Heart right ventricle (tissue), 16 donors: ENCODE measurements at regions of chr3 and their contacts with region 1.

Region 1: DNA sequence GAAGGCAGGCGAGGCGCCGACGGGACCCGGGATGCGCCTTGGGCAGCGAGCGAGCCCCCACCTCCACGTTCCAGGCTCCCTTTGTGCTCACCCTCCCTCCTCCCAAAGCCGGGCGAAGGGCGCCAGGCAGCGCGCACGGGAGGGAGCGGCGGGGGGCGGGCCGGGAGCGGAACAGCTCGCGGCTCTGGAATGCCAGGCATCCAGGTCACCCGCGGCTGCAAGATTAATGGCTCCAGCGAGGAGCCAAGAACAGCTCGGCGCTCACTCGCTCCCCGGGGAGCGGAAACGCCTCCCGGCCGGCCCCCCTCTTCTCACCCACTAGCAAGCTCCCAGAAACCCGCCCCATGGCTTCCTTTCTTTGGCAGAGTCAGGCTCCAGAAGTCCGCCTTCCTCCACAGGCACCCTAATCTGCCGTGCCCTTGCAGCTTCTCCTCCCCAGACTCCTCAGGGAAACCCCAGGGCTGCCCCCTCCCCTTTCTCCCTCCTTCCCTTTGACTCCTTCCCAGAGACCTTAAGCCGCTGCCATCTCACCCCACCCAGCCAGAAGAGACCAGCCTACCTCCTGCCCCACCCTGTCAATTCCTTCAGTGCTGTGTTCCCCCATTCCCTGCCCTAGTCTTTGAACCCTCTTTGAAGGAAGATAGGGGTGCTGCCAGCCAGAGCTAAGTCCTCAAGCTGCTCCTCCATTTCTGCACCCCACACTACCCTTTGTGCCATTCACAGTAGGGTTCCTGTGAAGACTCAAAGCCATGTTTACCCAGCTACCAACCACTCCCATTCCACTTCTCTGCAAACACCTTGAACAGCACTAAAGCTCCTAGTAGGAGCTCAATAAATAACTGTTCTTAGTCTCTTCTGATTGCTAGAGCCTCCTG is 9.9 kb downstream of the AMOTL2 start:
- DNase-seq: peak; percentile 94 to 95
- ATAC-seq: peak; percentile 88 to 92 (median 90)
- H3K4me3 ChIP-seq: peak overlapping the region in 8 of 10 donors; percentile 4 to 51 (median 36)
- H3K27ac ChIP-seq: peak overlapping the region; percentile 70 to 100 (median 98)
- H3K4me1 ChIP-seq: peaks cover 45 to 100% (median 97%) of the 10 kb centered on the region in 9 donors
- H3K27me3 ChIP-seq: peaks cover 0 to 15% (median 0%) of the 10 kb centered on the region in 7 donors
- CTCF ChIP-seq: no peak

Region 2: GRCh38 chr3:134315286-134316106 is 48.8 kb before region 1 on chr3:
- intact Hi-C with region 1: loop called in 4 of 10 experiments (anchors 5 kb)
- DNase-seq: peak; percentile 75
- ATAC-seq: peak; percentile 59 to 78 (median 68)
- H3K4me3 ChIP-seq: no peak overlapping the region
- H3K27ac ChIP-seq: peak overlapping the region; percentile 85 to 97 (median 92)
- H3K4me1 ChIP-seq: peaks cover 11 to 55% (median 47%) of the 10 kb centered on the region in 9 donors
- H3K27me3 ChIP-seq: peaks cover 0 to 28% (median 0%) of the 10 kb centered on the region in 7 donors
- CTCF ChIP-seq: no peak

Region 3: DNA sequence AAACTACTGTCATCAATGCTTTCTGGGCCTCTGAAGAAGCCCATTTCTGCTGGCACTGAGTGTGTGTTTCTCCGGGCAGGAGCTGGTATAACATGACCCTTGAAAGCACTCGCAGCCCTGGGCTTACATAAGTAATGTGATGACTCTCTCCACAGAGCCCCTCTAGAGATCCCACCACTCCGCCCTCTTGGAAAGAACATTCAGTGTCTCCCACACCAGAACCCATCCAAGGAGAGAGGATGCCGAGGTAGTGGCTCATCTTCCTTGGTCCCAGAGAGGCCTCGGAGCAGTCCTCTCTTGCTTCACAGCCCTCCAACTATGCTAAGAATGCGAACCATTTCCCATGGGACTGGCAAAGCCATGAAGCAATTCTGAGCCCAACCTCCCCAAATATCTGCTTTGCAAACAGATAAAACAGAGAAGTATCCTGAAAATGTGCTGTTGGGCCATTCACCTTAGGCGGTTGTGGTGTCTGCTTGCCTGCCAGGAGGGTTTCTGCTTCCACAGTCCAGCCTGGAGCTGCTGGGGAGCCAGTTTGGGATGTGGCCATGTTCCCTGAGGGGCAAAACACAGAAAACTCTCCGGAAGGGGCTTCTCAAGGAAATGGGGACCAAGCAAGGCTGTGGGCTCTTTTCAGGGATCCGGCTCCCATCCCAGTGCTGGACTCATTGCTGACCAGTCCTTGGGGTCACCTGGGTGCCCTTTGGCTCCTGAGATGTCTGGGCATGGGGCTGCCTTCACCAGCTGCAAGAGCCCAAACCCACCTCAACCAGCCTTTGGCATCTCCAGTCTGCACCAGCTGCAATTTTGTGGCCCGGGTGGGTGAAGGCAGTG is 37.3 kb before region 1 on chr3:
- intact Hi-C with region 1: loop called in 1 of 10 experiments (anchors 5 kb)
- DNase-seq: no peak
- ATAC-seq: peak; percentile 60 to 93 (median 68)
- H3K4me3 ChIP-seq: no peak overlapping the region
- H3K27ac ChIP-seq: peak overlapping the region in 9 of 10 donors; percentile 17 to 73 (median 38)
- H3K4me1 ChIP-seq: peaks cover 20 to 49% (median 42%) of the 10 kb centered on the region in 9 donors
- H3K27me3 ChIP-seq: no peaks in the 10 kb centered on the region
- CTCF ChIP-seq: no peak

Region 4: DNA sequence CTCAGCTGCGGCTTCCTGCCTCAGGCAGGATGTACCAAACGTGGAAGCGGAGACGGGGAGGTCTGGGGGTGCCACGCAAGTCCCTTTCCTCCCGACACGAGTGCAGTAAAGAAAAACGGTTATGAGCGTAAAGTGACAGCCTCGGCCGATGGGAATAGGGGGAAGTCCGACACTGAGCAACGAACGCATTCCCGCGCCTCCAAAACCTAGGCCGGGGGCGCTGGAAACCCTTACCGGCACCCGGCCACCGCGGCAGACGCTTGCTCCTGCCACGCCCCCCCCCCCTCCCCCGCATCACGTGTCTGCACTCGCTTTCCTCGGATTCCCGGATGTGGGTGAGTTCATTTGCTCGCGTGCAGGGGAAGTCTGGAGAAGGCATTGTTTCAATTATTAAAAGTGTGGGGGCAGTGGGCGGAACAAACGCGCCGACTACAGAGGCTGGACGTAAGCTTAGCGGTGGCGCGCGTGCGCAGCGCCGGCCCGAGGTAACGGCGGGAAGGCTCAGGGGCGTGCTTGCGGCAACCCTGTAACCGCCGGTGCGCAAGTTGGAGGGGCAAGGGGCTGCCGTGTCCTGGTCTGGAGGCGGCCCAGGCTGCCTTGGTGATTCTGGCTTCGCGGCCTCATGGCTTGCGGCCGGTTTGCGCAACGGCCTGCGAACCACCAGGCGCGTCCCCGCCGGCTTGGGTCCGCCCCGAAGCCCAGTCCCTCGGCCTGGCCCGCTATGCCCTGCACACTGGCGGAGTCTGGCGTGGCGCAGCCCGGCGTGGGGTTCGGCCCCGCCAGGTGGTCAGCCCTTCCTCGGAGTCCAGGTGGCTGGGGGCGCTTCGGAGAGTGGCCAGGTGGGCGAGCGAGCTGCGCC is 121.6 kb after region 1 on chr3 and contains the starts of genes ANAPC13 and CEP63:
- intact Hi-C with region 1: loop called in 1 of 10 experiments (anchors 5 kb)
- DNase-seq: peak; percentile 88 to 97
- ATAC-seq: peak; percentile 91 to 97 (median 94)
- H3K4me3 ChIP-seq: peak within 1 kb of the TSS; percentile 71 to 94 (median 79)
- H3K27ac ChIP-seq: peak within 1 kb of the TSS; percentile 93 to 99 (median 96)
- H3K4me1 ChIP-seq: peaks cover 11 to 53% (median 40%) of the 10 kb centered on the region in 9 donors
- H3K27me3 ChIP-seq: no peaks in the 10 kb centered on the region
- CTCF ChIP-seq: no peak
- total RNA-seq, gene ANAPC13: 68.2 to 119 (median 84.0) TPM
- total RNA-seq, gene CEP63: 27.6 to 38.8 (median 31.0) TPM